AG04449 (cell line): ENCODE measurements at regions of chr20 and their contacts with region 1.

Region 1: GRCh38 chr20:62900052-62900691 is 26.1 kb downstream of the DIDO1 start:
- DNase-seq: no peak
- H3K4me3 ChIP-seq: no peak overlapping the region
- CTCF ChIP-seq: peak; percentile 97

Region 2: GRCh38 chr20:62887147-62887859 is 12.9 kb before region 1 on chr20:
- CTCF ChIA-PET with region 1: interaction called, 133 read pairs
- POLR2A ChIA-PET with region 1: interaction called, 3 read pairs
- DNase-seq: peak; percentile 33
- H3K4me3 ChIP-seq: no peak overlapping the region
- CTCF ChIP-seq: no peak

Region 3: DNA sequence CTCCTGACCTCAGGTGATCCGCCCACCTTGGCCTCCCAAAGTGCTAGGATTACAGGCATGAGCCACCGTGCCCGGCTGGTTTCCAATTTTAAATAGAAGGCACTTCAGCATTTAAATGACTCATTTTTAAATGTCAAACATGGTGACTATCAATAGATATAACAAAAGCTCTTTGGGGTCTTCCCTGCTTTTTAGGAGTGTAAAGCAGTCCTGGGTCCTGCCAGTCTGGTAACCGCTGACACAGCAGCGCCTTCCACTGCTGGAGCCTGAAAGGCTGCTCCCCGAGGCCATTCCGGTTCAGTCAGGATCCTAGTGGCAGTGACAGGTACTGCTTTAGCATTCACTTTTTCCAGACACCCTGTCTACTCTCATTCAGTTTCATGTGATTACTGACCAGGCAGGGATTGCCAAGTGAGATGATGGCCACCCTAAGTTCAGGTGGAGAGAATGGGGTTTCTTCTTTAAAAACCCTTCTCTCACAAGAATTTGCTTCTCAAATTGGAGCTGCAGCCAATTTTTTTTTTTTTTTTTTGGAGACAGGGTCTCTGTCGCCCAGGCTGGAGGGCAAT is 21.0 kb after region 1 on chr20:
- CTCF ChIA-PET with region 1: interaction called, 189 read pairs
- POLR2A ChIA-PET with region 1: interaction called, 4 read pairs
- DNase-seq: no peak
- H3K4me3 ChIP-seq: no peak overlapping the region
- CTCF ChIP-seq: peak; percentile 70

Region 4: GRCh38 chr20:62926239-62927104 is 26.3 kb after region 1 on chr20 and contains the start of gene DIDO1:
- CTCF ChIA-PET with region 1: interaction called, 189 read pairs
- POLR2A ChIA-PET with region 1: interaction called, 3 read pairs
- DNase-seq: no peak
- H3K4me3 ChIP-seq: peak within 1 kb of the TSS; percentile 88
- CTCF ChIP-seq: peak; percentile 69

Region 5: GRCh38 chr20:62937366-62938104 is 37.4 kb after region 1 on chr20:
- CTCF ChIA-PET with region 1: interaction called, 29 read pairs
- POLR2A ChIA-PET with region 1: interaction called, 4 read pairs
- DNase-seq: peak; percentile 83
- H3K4me3 ChIP-seq: peak overlapping the region; percentile 94
- CTCF ChIP-seq: no peak

Region 6: GRCh38 chr20:63009045-63009961 is 109.1 kb after region 1 on chr20:
- CTCF ChIA-PET with region 1: interaction called, 30 read pairs
- POLR2A ChIA-PET with region 1: no interaction called
- DNase-seq: no peak
- H3K4me3 ChIP-seq: no peak overlapping the region
- CTCF ChIP-seq: peak; percentile 94